HepG2 (cell line): ENCODE measurements at regions of chr12 and their contacts with region 1.

Region 1: GRCh38 chr12:53159195-53159839 is 21.2 kb upstream of the ZNF740 start:
- DNase-seq: peak; percentile 77
- ATAC-seq: peak; percentile 88
- H3K4me3 ChIP-seq: peak overlapping the region in 1 of 3 experiments; percentile 36; a peak in 1 of 6 replicates
- H3K27ac ChIP-seq: no peak overlapping the region
- H3K4me1 ChIP-seq: peaks cover 44% of the 10 kb centered on the region
- H3K27me3 ChIP-seq: no peaks in the 10 kb centered on the region
- CTCF ChIP-seq: peak; percentile 99
- EP300 ChIP-seq: no peak
- POLR2A ChIP-seq: no peak
- RAD21 ChIP-seq: peak; percentile 89

Region 2: DNA sequence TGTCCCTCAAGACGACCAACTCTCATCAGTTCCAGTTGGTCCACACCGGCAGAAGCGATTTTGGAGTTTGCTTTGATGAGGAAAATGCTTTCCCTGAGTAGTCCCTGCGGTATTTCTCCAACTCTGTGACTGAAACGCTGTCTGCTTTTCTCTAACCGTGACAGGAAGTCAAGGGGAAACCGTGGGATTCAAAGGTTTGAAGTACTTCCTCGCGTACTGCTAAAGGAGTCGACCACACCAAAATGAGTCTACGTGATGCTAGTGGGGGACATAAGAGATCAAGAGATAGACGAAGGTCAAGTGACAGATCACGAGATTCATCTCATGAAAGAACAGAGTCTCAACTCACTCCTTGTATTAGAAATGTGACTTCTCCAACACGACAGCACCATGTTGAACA is 410.7 kb before region 1 on chr12:
- CTCF ChIA-PET with region 1: no interaction called
- POLR2A ChIA-PET with region 1: no interaction called
- in situ Hi-C with region 1: no loop called
- intact Hi-C with region 1: no loop called
- DNase-seq: no peak
- ATAC-seq: no peak
- H3K4me3 ChIP-seq: no peak overlapping the region
- H3K27ac ChIP-seq: no peak overlapping the region
- H3K4me1 ChIP-seq: no peaks in the 10 kb centered on the region
- H3K27me3 ChIP-seq: peaks cover 1 to 8% of the 10 kb centered on the region in 2 experiments; a peak in 3 of 5 replicates
- CTCF ChIP-seq: no peak
- EP300 ChIP-seq: no peak
- POLR2A ChIP-seq: no peak
- RAD21 ChIP-seq: no peak

Region 3: GRCh38 chr12:53180220-53180930 is 21.1 kb after region 1 on chr12 and contains the starts of genes CSAD and ZNF740:
- CTCF ChIA-PET with region 1: interaction called, 4 read pairs
- POLR2A ChIA-PET with region 1: interaction called, 34 read pairs
- in situ Hi-C with region 1: no loop called
- intact Hi-C with region 1: no loop called
- DNase-seq: peak; percentile 95
- ATAC-seq: peak; percentile 98
- H3K4me3 ChIP-seq: peak within 1 kb of the TSS; percentile 64 to 93 (median 82)
- H3K27ac ChIP-seq: peak within 1 kb of the TSS; percentile 91
- H3K4me1 ChIP-seq: peaks cover 56% of the 10 kb centered on the region
- H3K27me3 ChIP-seq: no peaks in the 10 kb centered on the region; a peak in 1 of 5 replicates
- CTCF ChIP-seq: no peak; the same call in 1 of the 2 replicates
- EP300 ChIP-seq: no peak
- POLR2A ChIP-seq: peak; percentile 75 to 88
- RAD21 ChIP-seq: no peak
- total RNA-seq, gene CSAD: 2.7 and 7.2 TPM in 2 replicates
- total RNA-seq, gene ZNF740: 15.0 and 16.9 TPM in 2 replicates

Region 4: GRCh38 chr12:53190108-53190729 is 30.9 kb after region 1 on chr12:
- CTCF ChIA-PET with region 1: interaction called, 23 read pairs
- POLR2A ChIA-PET with region 1: interaction called, 4 read pairs
- in situ Hi-C with region 1: loop called (anchors 5 kb)
- intact Hi-C with region 1: loop called (anchors 1 kb)
- DNase-seq: peak; percentile 49
- ATAC-seq: peak; percentile 88
- H3K4me3 ChIP-seq: no peak overlapping the region
- H3K27ac ChIP-seq: no peak overlapping the region
- H3K4me1 ChIP-seq: peaks cover 20% of the 10 kb centered on the region
- H3K27me3 ChIP-seq: no peaks in the 10 kb centered on the region
- CTCF ChIP-seq: peak; percentile 86
- EP300 ChIP-seq: no peak
- POLR2A ChIP-seq: peak in 1 of 2 experiments; percentile 6; a peak in 1 of 4 replicates
- RAD21 ChIP-seq: peak; percentile 86

Region 5: DNA sequence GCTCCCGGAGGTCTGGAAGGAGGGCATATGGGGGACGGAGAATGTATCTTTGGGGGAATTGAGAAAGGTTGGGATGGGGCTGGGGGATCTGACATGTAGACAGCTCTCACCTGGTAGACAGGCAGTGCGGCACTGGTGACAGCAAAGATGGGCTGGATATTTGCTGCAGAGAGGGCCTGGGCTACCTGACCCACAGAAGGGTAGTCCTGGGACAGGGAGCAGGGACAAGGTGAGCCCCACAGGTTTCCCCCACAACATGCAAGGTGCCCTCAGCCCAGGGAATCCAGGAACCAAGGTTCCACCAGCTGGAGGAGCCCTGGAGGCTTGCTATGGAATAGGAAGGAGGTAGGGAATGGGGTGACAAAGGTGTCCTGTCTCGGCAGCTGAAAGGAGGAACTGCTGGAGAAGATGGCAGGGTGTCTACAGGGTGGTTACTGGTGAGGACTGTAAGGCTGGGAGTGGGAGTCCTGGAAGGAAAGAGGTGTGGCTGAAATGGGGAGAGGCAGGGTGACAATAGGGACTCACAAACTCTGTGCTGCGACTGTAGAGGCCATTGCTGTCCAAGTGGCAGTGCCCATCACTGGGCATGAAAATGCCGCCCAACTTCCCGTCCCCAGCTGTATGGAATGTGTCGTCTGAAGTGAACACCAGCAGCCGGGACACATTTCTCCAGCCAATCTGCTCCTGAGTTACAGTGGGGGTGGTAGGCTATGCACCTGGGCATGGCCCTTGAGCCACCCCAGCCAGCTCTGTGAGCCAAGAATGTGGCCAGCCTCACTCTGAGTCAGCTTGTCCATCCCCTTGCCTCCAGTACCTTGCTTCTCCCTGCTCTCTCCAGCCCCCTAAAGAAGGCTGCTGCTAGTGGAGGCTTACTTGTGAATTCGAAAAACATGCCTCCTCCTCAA is 36.5 kb after region 1 on chr12:
- CTCF ChIA-PET with region 1: interaction called, 23 read pairs
- POLR2A ChIA-PET with region 1: interaction called, 9 read pairs
- in situ Hi-C with region 1: loop called (anchors 5 kb)
- intact Hi-C with region 1: loop called (anchors 1 kb)
- DNase-seq: no peak
- ATAC-seq: 0 out of 3 replicates have a peak, but pooled peaks have one; percentile 1
- H3K4me3 ChIP-seq: no peak overlapping the region
- H3K27ac ChIP-seq: no peak overlapping the region
- H3K4me1 ChIP-seq: peaks cover 42% of the 10 kb centered on the region
- H3K27me3 ChIP-seq: 0 out of 5 replicates have a peak, but pooled peaks cover 0 to 2% of the 10 kb centered on the region in 2 experiments
- CTCF ChIP-seq: no peak
- EP300 ChIP-seq: no peak
- POLR2A ChIP-seq: peak in 1 of 2 experiments; percentile 18; a peak in 1 of 4 replicates
- RAD21 ChIP-seq: no peak

Region 6: DNA sequence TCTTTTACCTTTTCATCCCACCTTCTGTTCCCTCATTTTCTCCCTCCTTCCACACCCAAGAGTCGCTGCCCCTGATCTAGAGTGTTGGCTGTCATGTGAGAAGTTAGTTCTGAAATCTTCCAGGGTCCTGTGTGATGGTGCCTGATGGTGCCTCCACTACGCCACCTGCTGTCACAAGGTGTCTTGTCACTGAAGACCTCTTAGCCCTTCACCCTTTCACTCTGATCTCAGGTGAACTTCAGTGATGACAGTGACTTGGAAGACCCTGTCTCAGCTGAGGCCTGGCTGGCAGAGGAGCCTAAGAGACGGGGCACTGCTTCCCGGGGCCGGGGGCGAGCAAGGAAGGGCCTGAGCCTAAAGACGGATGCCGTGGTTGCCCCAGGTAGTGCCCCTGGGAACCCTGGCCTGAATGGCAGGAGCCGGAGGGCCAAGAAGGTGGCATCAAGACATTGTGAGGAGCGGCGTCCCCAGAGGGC is 128.5 kb after region 1 on chr12:
- CTCF ChIA-PET with region 1: interaction called, 3 read pairs
- POLR2A ChIA-PET with region 1: no interaction called
- in situ Hi-C with region 1: no loop called
- intact Hi-C with region 1: loop called (anchors 5 kb)
- DNase-seq: peak; percentile 38
- ATAC-seq: peak; percentile 84
- H3K4me3 ChIP-seq: no peak overlapping the region
- H3K27ac ChIP-seq: no peak overlapping the region
- H3K4me1 ChIP-seq: no peaks in the 10 kb centered on the region
- H3K27me3 ChIP-seq: no peaks in the 10 kb centered on the region
- CTCF ChIP-seq: peak; percentile 82
- EP300 ChIP-seq: no peak
- POLR2A ChIP-seq: no peak
- RAD21 ChIP-seq: peak; percentile 66

Region 7: DNA sequence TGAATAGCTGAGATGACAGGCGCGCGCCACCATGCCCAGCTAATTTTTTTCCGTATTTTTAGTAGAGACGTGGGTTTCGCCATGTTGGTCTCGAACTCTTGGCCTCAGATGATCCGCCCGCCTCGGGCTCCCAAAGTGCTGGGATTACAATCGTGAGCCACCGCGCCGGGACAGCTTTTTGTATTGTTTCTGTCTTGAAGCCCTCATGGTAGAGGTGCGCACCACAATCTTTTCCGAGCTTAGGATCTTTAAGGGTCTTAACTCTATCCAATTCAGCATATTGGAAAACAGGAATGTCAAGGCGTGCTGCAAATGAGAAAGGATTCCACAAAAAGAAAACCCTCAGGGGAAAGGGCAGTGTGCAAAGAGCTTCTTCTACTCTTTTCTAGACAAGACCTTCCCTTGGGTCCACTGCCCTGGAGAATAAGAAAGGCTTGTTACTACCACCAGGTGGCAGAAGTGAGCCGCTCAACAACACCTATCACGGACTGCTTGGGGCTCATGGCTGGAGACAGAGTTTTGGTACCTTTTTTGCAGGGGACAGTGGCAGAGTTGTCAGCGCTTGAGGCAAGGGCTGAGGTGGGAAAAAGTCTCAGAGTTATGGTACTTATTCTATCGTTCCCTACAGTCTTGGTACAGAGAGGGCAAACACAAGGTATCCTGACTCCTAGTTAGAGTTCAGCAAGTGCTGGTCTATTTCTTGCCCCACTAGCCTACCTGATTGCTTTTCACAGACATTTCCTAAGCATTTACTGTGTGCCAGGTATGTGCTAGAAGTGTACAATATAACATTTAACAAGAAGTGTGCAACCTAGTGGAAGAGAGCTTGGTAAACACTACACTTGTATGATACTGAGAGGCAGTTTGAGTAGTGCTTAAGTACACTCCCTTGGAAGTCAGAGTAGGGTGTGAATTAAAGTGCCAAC is 193.3 kb after region 1 on chr12:
- CTCF ChIA-PET with region 1: no interaction called
- POLR2A ChIA-PET with region 1: no interaction called
- in situ Hi-C with region 1: no loop called
- intact Hi-C with region 1: no loop called
- DNase-seq: peak; percentile 80
- ATAC-seq: peak; percentile 98
- H3K4me3 ChIP-seq: no peak overlapping the region
- H3K27ac ChIP-seq: no peak overlapping the region
- H3K4me1 ChIP-seq: peaks cover 22% of the 10 kb centered on the region
- H3K27me3 ChIP-seq: no peaks in the 10 kb centered on the region
- CTCF ChIP-seq: peak; percentile 93
- EP300 ChIP-seq: no peak
- POLR2A ChIP-seq: no peak
- RAD21 ChIP-seq: peak; percentile 89

Region 8: GRCh38 chr12:54723379-54724256 is 1564.3 kb after region 1 on chr12:
- CTCF ChIA-PET with region 1: no interaction called
- POLR2A ChIA-PET with region 1: no interaction called
- in situ Hi-C with region 1: no loop called
- intact Hi-C with region 1: no loop called
- DNase-seq: no peak
- ATAC-seq: no peak
- H3K4me3 ChIP-seq: no peak overlapping the region
- H3K27ac ChIP-seq: no peak overlapping the region
- H3K4me1 ChIP-seq: no peaks in the 10 kb centered on the region
- H3K27me3 ChIP-seq: no peaks in the 10 kb centered on the region
- CTCF ChIP-seq: peak; percentile 20; the same call in 1 of the 2 replicates
- EP300 ChIP-seq: no peak
- POLR2A ChIP-seq: no peak
- RAD21 ChIP-seq: no peak